Activated CD8-positive, alpha-beta T cell treated with anti-CD3 and anti-CD28 coated beads, Interleukin-2, amount 10 ng/mL, durations not matched to agents 7 days and 5 days (primary cell): ENCODE measurements at regions of chr2 and their contacts with region 1.

Region 1: GRCh38 chr2:181457121-181457740 is at the start of gene ITGA4:
- DNase-seq: peak; percentile 91
- ATAC-seq: peak; percentile 82
- H3K4me3 Mint-ChIP-seq: peak within 1 kb of the TSS; percentile 89
- H3K27ac Mint-ChIP-seq: peak within 1 kb of the TSS; percentile 89
- H3K4me1 Mint-ChIP-seq: peaks cover 34% of the 10 kb centered on the region
- H3K27me3 Mint-ChIP-seq: no peaks in the 10 kb centered on the region
- total RNA-seq, gene ITGA4: 144 to 152 TPM

Region 2: GRCh38 chr2:181130686-181131085 is 326.5 kb before region 1 on chr2:
- CTCF ChIA-PET with region 1: interaction called, 14 read pairs
- POLR2A ChIA-PET with region 1: interaction called, 78 read pairs
- DNase-seq: no peak
- ATAC-seq: no peak
- H3K4me3 Mint-ChIP-seq: peak overlapping the region; percentile 72
- H3K27ac Mint-ChIP-seq: peak overlapping the region; percentile 84
- H3K4me1 Mint-ChIP-seq: peaks cover 55% of the 10 kb centered on the region
- H3K27me3 Mint-ChIP-seq: no peaks in the 10 kb centered on the region

Region 3: DNA sequence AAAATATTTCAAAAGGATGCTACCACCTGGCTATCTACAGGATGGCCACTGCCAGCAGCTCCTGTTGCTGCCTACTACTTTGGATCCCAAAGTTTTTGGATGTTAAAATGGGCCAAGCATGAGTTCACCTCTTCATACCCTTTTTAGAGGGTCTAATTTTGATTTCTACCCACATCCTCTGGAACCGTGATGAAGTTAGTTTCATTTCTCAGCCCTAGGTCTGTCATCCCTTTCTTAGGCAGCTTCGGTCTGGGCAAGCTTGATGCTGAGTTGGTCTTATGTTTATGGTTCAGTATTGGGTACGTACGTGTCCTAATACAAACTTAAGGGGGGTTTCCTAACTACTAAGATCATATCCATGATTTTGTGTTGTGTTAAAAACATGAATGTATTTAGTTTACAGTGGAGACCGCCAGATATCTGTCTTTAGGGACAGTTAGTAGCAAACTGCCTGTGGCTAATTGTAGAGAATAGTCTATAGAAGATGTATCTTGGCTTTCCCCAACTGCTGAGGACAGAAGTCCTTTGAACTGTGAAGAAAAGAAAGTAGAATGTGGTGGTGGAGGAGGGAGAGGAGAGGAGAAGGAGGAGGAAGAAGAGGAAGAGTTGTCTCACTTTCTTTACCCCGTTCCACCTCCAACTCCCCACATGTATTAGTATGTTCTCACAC is 291.9 kb before region 1 on chr2:
- CTCF ChIA-PET with region 1: interaction called, 4 read pairs
- POLR2A ChIA-PET with region 1: interaction called, 11 read pairs
- DNase-seq: peak; percentile 55
- ATAC-seq: peak; percentile 86
- H3K4me3 Mint-ChIP-seq: peak overlapping the region; percentile 27
- H3K27ac Mint-ChIP-seq: peak overlapping the region; percentile 93
- H3K4me1 Mint-ChIP-seq: peaks cover 47% of the 10 kb centered on the region
- H3K27me3 Mint-ChIP-seq: no peaks in the 10 kb centered on the region

Region 4: DNA sequence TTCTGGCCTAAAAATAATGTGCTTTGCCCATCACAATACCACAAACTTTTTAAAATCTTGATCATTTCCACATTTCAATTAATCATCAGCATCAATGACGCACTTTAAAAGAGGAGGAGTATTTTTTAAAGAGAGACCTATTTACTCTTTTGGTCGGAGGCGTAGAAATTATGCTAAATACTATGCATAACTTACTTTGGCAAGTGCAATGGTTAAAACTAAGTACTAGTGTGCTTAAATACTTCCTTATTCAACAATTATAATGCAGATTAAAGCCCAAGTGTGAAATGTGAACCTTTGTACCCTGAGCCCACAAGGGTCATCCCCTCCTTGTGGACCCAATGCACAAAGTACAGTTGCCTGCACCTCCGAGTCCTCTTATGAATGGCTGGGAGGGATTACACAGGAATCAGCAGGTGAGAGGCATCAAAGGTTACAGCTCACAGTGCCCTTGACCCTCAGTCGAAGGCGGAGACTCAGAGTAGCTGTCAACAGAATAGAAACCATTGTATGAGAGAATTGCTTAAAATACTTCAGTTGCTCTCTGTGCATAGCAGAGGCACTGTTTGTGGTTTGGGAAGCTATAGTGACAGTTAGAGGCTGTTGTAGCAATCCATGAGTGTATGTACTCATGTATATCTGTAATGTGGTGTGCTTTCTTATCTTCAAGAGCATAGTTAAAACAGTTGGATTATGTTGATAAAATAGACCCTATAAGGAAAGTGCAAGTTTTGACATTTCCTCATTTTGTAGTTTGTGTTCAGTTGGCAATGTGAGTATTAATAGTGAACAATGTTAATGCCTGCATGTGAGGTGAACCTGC is 151.7 kb before region 1 on chr2:
- CTCF ChIA-PET with region 1: interaction called, 15 read pairs
- POLR2A ChIA-PET with region 1: interaction called, 249 read pairs
- DNase-seq: peak; percentile 80
- ATAC-seq: peak; percentile 78
- H3K4me3 Mint-ChIP-seq: peak overlapping the region; percentile 76
- H3K27ac Mint-ChIP-seq: peak overlapping the region; percentile 93
- H3K4me1 Mint-ChIP-seq: peaks cover 67% of the 10 kb centered on the region
- H3K27me3 Mint-ChIP-seq: no peaks in the 10 kb centered on the region

Region 5: DNA sequence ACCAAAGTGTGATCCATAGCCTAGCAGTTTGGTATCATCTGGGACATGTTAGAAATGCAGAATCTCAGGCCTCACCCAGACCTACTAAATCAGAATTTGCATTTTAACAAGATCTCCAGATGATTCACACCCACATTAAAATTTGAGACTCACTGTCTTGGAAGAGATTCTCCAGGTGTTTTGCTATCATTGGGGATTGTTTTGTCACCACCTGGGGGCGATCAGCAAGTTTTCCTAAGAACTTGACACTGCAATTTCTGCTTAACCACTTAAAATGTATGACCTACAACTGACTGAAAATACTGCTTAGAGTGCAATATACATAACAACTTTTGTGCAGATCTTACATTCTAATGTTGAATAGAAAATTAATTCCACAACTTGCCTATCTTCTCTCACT is 19.0 kb before region 1 on chr2:
- CTCF ChIA-PET with region 1: interaction called, 20 read pairs
- POLR2A ChIA-PET with region 1: interaction called, 3 read pairs
- DNase-seq: peak; percentile 40
- ATAC-seq: peak; percentile 55
- H3K4me3 Mint-ChIP-seq: no peak overlapping the region
- H3K27ac Mint-ChIP-seq: no peak overlapping the region
- H3K4me1 Mint-ChIP-seq: peaks cover 22% of the 10 kb centered on the region
- H3K27me3 Mint-ChIP-seq: no peaks in the 10 kb centered on the region

Region 6: DNA sequence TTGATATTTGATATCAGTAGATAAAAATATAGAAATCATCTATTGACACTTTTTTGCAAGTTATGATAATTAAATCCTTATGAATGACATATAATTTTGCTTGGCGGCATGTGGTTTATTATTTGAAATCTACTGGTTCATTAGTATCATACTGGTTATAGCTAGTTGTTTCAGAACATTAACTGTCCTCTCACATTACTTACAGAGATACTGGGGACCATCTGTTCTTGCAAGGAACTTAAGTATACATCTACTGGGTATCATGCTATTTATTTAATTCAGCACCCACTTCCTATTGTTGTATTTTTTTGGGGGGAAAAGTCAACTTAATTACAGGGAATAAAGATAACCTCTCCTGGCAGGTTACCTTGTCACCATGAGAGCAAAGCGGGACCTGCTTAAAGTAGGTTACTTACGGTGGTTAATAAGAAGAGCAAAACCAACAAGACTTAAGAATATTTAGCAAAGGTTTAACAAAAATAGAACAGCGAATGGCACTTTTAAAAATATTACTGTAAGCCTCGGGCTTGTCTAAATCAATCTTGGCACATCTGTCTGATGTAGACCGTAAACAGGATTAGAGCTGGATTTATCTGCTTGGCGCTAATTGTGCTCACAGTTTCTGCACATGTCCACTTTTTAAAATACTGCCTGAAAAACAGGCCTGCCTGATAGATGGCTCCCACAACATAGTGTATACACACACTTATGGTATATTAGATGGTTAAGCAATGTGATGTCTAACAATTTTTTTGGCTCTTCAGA is 157.8 kb after region 1 on chr2:
- CTCF ChIA-PET with region 1: no interaction called
- POLR2A ChIA-PET with region 1: no interaction called
- DNase-seq: no peak
- ATAC-seq: no peak
- H3K4me3 Mint-ChIP-seq: no peak overlapping the region
- H3K27ac Mint-ChIP-seq: no peak overlapping the region
- H3K4me1 Mint-ChIP-seq: no peaks in the 10 kb centered on the region
- H3K27me3 Mint-ChIP-seq: peaks cover 7% of the 10 kb centered on the region